GM10248 (cell line): ENCODE measurements at regions of chr4 and their contacts with region 1.

Region 1: DNA sequence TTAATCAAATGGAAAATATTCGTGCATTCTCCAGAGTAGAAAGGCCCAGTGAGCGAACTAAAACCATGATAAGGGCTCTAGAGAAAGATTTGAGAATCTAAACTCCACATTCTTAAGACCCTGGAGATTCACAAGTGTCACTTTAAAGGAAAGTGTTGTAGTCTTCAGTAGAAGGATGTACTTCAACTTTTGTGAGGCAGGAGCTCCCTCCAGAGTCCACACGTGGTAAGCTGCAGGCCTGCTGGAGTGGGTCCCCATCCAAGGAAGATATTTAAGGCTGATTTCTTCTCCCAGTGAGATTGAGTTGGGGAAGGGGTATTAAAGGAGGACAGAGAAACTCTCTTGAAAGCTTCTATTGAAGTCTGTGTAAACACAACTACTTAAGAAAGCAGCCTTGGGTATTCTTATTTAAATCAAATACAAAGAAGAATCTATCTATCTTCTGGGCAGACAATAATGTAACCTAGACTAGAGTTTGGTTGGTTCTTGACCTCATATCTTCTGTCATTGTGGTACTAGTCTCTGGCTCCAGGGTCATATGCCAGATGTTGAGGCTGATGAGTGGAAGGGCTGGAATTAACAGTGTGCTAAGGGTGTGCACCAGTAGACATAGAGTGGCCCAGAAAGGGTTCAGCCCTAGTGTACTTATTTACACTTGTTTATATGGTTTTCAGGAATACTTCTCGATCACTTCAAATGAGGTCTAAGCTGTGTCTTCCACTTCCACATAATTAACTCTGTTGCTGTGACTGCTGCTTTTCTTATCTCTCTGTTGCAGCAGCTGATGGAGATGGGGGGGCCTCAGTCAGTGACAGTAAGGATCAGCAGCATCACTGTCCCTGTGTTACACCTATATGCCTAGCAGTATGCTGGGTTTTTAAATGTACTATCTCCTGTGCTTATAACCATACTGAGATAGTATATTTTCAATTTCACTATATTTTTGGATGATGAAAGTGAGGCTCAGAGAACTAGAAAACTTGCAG is 76.1 kb downstream of the HMGB2 start:
- DNase-seq: peak; percentile 44
- CTCF ChIP-seq: peak; percentile 83

Region 2: GRCh38 chr4:173025131-173025530 is 232.9 kb before region 1 on chr4:
- CTCF ChIA-PET with region 1: interaction called, 125 read pairs
- POLR2A ChIA-PET with region 1: no interaction called
- DNase-seq: peak; percentile 54
- CTCF ChIP-seq: peak; percentile 53

Region 3: GRCh38 chr4:173237152-173237551 is 20.9 kb before region 1 on chr4:
- CTCF ChIA-PET with region 1: interaction called, 13 read pairs
- POLR2A ChIA-PET with region 1: no interaction called
- DNase-seq: no peak
- CTCF ChIP-seq: no peak

Region 4: GRCh38 chr4:173270312-173271027 is 12.4 kb after region 1 on chr4:
- CTCF ChIA-PET with region 1: interaction called, 22 read pairs
- POLR2A ChIA-PET with region 1: no interaction called
- DNase-seq: no peak
- CTCF ChIP-seq: no peak

Region 5: GRCh38 chr4:173288296-173288695 is 30.3 kb after region 1 on chr4:
- CTCF ChIA-PET with region 1: interaction called, 16 read pairs
- POLR2A ChIA-PET with region 1: no interaction called
- DNase-seq: peak; percentile 38
- CTCF ChIP-seq: peak; percentile 50

Region 6: DNA sequence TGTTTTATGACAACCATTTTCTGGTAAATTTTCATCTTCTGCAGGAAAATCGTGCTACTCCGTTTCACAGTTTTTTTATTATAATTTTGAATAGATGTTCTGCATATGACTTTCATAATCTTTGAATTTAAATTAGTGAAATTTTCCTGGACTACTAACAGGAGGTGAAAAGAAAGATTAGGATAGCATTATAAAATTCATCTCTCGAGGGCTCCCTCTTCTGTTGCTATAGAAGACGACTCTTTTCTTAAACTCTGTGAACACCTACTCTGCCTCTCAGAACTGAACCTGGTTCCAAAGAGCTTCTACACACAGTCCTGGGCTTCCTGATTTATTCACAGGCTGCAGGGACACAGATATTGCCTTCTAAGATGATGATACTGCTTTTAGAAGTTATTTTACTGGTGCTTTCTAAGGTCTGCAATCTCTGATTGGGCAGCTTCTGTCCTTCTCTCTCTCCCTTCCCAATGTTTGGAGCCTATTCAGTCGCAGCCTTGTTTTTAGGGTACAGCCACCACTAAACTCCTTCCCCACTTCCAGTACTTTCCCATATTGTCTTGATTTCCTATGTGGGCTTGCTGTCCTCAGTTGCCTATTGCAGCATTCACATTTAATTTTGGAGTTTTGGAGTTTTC is 102.7 kb after region 1 on chr4:
- CTCF ChIA-PET with region 1: no interaction called
- POLR2A ChIA-PET with region 1: no interaction called
- DNase-seq: no peak
- CTCF ChIP-seq: no peak

Region 7: DNA sequence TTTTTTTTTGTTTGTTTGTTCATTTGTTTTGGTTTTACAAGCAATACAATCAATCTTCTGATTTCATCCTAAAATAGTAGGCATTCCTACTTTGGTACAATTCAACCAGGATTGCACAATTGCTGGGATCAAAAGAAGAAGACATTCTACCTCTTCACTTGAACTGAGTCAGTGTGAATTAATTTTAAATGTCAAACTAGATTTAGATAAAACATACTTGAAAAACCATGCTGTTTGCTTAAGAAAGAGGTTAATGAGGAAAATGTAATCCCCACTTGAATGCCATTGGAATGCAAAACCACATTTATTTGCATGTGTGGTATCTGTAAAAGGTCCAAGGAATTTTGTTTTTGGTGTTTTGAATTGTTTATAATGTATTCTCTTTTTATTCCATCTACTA is 231.5 kb after region 1 on chr4:
- CTCF ChIA-PET with region 1: no interaction called
- POLR2A ChIA-PET with region 1: no interaction called
- DNase-seq: no peak
- CTCF ChIP-seq: no peak

Region 8: DNA sequence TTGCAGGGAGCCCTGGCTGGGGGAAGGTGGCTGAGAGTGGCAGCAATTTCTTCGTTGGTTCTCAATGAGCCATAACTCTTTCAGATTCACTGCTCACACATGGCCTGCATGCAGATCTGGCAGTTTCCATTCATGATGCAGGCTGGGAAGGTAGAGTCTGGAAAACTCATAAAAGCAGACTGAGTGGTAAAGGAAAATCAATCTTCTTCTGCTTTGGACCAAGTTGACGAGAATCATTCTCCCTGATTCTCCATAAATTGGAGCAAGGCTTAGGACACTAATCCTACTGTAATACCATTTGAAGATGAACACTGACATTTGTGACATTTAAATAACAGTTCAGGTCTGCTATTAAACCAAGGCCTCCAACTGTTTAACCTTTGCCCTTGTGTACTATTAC is 307.3 kb after region 1 on chr4:
- CTCF ChIA-PET with region 1: no interaction called
- POLR2A ChIA-PET with region 1: no interaction called
- DNase-seq: no peak
- CTCF ChIP-seq: no peak